ENCODE measurements at regions of chr6 and their contacts with region 1.

Region 1: DNA sequence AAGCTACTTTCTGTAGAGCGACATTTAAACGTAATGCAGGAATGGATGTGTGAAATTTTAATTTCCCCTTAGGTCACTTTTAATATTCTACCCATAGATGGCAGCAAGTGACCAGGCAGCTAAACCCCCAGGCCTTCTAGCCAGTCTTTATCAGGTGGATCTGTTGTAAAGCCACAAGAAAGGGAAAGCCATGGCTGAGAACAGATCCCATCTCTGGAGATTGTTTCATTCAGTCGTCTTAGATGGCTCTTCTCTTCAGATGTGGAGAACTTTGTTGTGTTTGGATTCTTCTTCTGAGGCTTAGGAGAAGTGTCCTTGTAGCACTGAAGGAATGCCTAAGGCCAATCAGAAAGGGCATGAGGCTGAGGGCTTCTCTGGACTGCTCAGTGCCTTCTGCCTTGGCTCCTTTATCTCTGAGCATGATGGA is 15.8 kb upstream of the RNF182 start:
- DNase-seq: no peak

Region 2: DNA sequence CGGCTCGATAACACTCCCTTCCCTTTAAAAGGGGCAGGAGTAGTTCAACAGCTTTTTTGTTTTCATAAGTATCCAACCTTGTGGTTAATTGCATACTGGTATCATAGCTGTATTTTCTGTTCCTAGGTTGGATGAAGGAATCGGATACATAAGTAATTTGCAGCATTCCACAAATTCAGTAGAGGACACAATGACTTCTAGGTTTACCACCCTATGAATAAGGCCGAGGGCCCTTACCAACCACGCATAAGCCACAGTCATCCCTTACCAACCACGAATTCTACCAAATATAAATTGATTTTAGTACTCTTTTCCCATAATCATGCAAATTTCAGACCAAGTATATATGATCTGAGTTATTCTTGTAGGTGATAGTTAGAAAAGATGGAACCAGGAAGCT is 130.9 kb before region 1 on chr6:
- intact Hi-C with region 1: no loop called
- DNase-seq: no peak

Region 3: DNA sequence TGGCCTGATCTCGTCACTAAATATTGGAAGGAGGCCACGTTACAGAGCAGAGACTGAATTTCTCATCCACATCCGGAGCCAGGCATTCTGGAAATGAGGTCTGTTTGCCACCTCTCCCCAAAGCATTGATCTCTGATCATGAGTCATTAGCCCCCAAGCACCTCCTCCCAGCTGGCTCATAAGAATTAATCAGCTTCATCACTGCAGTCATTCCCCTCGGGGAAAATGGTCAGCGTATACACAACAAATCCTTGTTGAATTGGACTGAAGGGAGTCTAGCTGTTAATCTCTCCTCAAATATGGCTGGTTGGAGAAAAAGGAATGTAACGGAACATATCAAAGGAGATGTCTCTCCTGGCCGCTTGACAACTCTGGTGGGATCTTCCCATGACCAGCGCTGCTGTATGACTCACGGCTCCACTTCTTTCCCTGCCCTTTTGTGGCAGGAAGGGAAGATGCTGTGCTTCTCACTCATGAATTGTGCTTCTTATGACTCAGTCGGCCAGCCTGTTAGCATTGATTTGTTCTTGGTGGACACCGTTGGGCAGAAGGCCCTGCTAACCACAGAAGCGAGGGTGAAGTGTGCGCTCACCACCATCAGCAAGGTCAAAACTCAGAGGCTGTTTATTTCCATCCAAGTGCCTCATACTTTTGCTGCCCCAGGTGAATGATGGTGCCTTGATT is 92.5 kb after region 1 on chr6:
- intact Hi-C with region 1: no loop called
- DNase-seq: no peak

Region 4: GRCh38 chr6:14066782-14067406 is 157.9 kb after region 1 on chr6:
- intact Hi-C with region 1: loop called (anchors 2 kb)
- DNase-seq: no peak

Region 5: DNA sequence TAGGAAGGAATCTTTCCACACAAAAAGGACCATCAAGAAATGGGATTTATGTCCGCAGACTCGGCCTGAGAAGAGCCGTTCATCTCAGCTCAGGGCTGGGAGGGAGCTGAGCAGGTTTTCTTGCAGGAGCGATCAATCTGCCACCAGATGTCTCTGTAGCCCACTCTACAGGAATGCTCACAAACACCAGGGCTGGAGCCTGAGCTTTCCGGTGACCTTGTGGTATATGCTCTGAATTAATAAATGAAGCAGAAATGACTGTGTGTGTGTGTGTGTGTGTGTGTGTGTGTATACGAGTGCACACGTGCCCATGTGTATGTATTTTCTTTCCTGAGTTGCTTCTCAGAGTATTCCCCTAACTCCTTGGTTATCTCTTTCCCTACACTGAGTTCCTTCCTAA is 220.6 kb after region 1 on chr6:
- intact Hi-C with region 1: no loop called
- DNase-seq: no peak

Region 6: GRCh38 chr6:14144678-14145113 is 235.7 kb after region 1 on chr6:
- intact Hi-C with region 1: loop called (anchors 5 kb)
- DNase-seq: peak; percentile 87

Measured in cardiac septum (tissue), 1 donor.